Calu3 (cell line): ENCODE measurements at regions of chr12 and their contacts with region 1.

Region 1: GRCh38 chr12:65891987-65892481 is 67.8 kb downstream of the HMGA2 start:
- DNase-seq: peak; percentile 56
- H3K4me3 Mint-ChIP-seq: peak overlapping the region; percentile 46
- H3K27ac Mint-ChIP-seq: peak overlapping the region; percentile 79
- H3K4me1 Mint-ChIP-seq: peaks cover 93% of the 10 kb centered on the region
- H3K27me3 Mint-ChIP-seq: no peaks in the 10 kb centered on the region
- CTCF ChIP-seq: no peak

Region 2: GRCh38 chr12:65778258-65779090 is 113.6 kb before region 1 on chr12:
- CTCF ChIA-PET with region 1: interaction called, 11 read pairs
- intact Hi-C with region 1: no loop called
- DNase-seq: no peak
- H3K4me3 Mint-ChIP-seq: peak overlapping the region; percentile 14
- H3K27ac Mint-ChIP-seq: peak overlapping the region; percentile 11
- H3K4me1 Mint-ChIP-seq: peaks cover 24% of the 10 kb centered on the region
- H3K27me3 Mint-ChIP-seq: no peaks in the 10 kb centered on the region
- CTCF ChIP-seq: no peak

Region 3: GRCh38 chr12:65853489-65854370 is 38.3 kb before region 1 on chr12:
- CTCF ChIA-PET with region 1: no interaction called
- intact Hi-C with region 1: no loop called
- DNase-seq: no peak
- H3K4me3 Mint-ChIP-seq: no peak overlapping the region
- H3K27ac Mint-ChIP-seq: no peak overlapping the region
- H3K4me1 Mint-ChIP-seq: peaks cover 33% of the 10 kb centered on the region
- H3K27me3 Mint-ChIP-seq: no peaks in the 10 kb centered on the region
- CTCF ChIP-seq: no peak

Region 4: DNA sequence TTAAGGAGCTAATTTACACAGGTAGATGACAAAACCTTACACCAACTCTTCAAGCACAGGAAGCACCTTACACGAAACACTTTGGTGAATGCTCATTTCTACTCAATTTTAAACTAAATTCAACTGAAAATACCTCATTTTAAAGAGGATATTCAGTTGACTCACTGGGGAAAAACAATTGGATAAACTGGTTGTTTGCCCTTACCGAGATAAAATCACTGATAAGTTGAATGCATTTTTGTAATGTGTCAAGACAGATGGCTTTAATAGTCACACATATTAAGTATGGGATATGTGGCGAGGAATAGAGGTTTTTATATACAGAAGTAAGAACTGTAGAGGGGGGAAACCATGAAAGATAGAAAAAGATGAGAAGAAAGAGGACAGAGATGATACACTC is 37.6 kb after region 1 on chr12:
- CTCF ChIA-PET with region 1: no interaction called
- intact Hi-C with region 1: loop called (anchors 2 kb)
- DNase-seq: no peak
- H3K4me3 Mint-ChIP-seq: peak overlapping the region; percentile 12
- H3K27ac Mint-ChIP-seq: peak overlapping the region; percentile 52
- H3K4me1 Mint-ChIP-seq: peaks cover 80% of the 10 kb centered on the region
- H3K27me3 Mint-ChIP-seq: no peaks in the 10 kb centered on the region
- CTCF ChIP-seq: no peak

Region 5: GRCh38 chr12:65952737-65953209 is 60.7 kb after region 1 on chr12:
- CTCF ChIA-PET with region 1: no interaction called
- intact Hi-C with region 1: loop called (anchors 2 kb)
- DNase-seq: peak; percentile 24
- H3K4me3 Mint-ChIP-seq: peak overlapping the region; percentile 9
- H3K27ac Mint-ChIP-seq: peak overlapping the region; percentile 23
- H3K4me1 Mint-ChIP-seq: peaks cover 75% of the 10 kb centered on the region
- H3K27me3 Mint-ChIP-seq: no peaks in the 10 kb centered on the region
- CTCF ChIP-seq: no peak

Region 6: DNA sequence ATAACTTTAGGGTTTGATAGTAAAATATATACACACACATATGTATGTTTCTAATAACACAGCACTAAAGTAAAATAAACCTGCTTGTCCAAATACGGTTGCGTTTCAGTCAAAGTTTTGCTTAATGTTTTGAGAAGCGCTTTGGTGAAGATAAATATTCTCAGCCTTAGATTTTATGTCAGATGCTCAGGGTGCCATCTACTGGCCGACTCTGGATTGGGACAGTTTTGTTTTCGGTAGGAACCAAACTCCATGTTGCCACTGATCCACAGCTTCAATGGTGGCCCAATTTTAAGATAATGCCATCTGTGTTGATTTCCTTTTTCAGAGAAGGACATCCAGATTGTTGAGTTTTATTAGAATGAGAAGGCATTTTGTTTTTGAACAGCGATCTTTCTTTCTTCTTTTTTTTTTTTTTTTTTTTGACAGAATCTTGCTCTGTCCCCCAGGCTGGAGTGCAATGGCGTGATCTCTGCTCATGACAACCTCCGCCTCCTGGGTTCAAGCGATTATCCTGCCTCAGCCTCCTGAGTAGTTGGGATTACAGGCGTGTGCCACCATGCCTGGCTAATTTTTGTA is 195.4 kb after region 1 on chr12:
- CTCF ChIA-PET with region 1: no interaction called
- intact Hi-C with region 1: loop called (anchors 10 kb)
- DNase-seq: peak; percentile 72
- H3K4me3 Mint-ChIP-seq: no peak overlapping the region
- H3K27ac Mint-ChIP-seq: no peak overlapping the region
- H3K4me1 Mint-ChIP-seq: peaks cover under 1% of the 10 kb centered on the region
- H3K27me3 Mint-ChIP-seq: no peaks in the 10 kb centered on the region
- CTCF ChIP-seq: peak; percentile 68

Region 7: DNA sequence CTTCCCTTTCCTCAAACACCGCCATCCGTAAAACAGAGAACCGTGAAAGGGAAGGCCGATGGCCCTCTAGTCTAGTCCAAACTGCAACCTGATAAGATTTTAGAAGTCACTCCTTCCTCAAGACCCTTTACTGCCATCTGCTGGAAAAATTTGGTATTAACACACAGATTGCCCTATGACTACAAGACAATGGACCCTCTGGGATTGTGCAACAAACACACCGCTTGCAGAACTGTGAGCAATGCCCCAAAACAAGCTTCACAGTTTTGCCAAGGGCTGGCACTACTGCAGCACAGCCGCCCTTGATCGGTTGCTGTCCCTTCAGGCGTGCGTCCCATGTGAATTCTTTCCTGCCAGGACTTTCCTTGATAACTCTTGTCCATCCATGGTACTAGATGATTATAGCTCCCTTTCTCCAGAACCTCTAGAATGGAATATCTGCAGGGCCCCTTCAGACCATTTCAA is 215.4 kb after region 1 on chr12:
- CTCF ChIA-PET with region 1: no interaction called
- intact Hi-C with region 1: no loop called
- DNase-seq: peak; percentile 88
- H3K4me3 Mint-ChIP-seq: no peak overlapping the region
- H3K27ac Mint-ChIP-seq: no peak overlapping the region
- H3K4me1 Mint-ChIP-seq: peaks cover 7% of the 10 kb centered on the region
- H3K27me3 Mint-ChIP-seq: peaks cover 25% of the 10 kb centered on the region
- CTCF ChIP-seq: peak; percentile 78